ENCODE measurements at regions of chr21 and their contacts with region 1.

Region 1: GRCh38 chr21:46144464-46145070 is 10.8 kb downstream of the FTCD start:
- DNase-seq: no peak
- ATAC-seq: no peak
- H3K4me3 ChIP-seq: no peak overlapping the region
- H3K4me3 Mint-ChIP-seq: peak overlapping the region; percentile 26
- H3K27ac ChIP-seq: no peak overlapping the region
- H3K27ac Mint-ChIP-seq: peak overlapping the region; percentile 59
- H3K4me1 ChIP-seq: peaks cover 0 to 5% of the 10 kb centered on the region in 2 donors
- H3K4me1 Mint-ChIP-seq: peaks cover 8% of the 10 kb centered on the region
- H3K27me3 ChIP-seq: no peaks in the 10 kb centered on the region
- H3K27me3 Mint-ChIP-seq: no peaks in the 10 kb centered on the region
- CTCF ChIP-seq: no peak

Region 2: GRCh38 chr21:46184625-46185555 is 40.3 kb after region 1 on chr21:
- CTCF ChIA-PET with region 1: no interaction called
- POLR2A ChIA-PET with region 1: no interaction called
- intact Hi-C with region 1: loop called (anchors 1 kb)
- DNase-seq: peak; percentile 91
- ATAC-seq: peak; percentile 84
- H3K4me3 ChIP-seq: peak overlapping the region; percentile 36 to 91 (median 76)
- H3K4me3 Mint-ChIP-seq: peak overlapping the region; percentile 92
- H3K27ac ChIP-seq: peak overlapping the region; percentile 59 to 63
- H3K27ac Mint-ChIP-seq: peak overlapping the region; percentile 90
- H3K4me1 ChIP-seq: peaks cover 0 to 16% of the 10 kb centered on the region in 2 donors
- H3K4me1 Mint-ChIP-seq: peaks cover 9% of the 10 kb centered on the region
- H3K27me3 ChIP-seq: no peaks in the 10 kb centered on the region
- H3K27me3 Mint-ChIP-seq: no peaks in the 10 kb centered on the region
- CTCF ChIP-seq: no peak